ENCODE measurements at regions of chr12 and their contacts with region 1.

Region 1: DNA sequence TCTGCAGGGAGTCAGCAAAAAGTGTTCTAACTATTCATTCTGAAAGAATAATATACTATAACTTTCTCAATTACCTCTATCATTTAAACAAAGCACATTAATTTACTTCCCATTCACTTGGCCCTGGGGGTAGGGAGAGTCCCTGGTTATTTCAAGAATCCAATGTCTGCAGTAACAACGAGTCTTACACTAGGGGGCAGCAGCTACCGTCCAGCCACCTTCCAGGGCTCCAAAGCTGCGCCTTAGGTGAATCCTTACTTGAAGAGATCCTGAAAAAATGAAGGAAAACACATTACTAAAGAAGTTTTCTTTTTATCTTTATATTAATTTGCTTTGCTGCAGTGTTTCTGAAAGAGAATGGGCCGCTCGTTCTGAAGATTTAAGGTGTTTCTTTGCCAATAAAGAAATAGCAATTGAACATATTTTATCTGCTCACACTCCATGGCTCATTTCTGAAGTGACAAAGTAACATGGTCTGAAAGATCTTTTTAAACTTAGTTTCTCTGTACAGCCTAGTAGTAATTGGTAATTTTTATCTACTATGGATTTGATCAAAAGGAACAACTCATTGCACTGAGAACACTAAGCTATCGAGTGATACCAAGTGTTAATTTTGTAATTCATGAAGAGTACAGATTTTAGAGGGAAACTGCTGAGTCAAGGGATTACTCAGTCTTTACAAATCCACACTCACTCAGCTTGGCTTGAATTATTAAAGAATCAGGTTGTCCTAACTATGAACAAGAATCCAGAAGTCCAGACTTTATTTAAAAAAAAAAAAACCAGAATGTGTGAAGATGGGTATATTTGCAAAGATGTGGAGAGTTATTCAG is 27.6 kb downstream of the BHLHE41 start:
- DNase-seq: peak; percentile 66 to 79 (median 77)
- H3K4me3 ChIP-seq: no peak overlapping the region
- H3K27ac ChIP-seq: no peak overlapping the region
- H3K4me1 ChIP-seq: no peaks in the 10 kb centered on the region
- H3K27me3 ChIP-seq: no peaks in the 10 kb centered on the region
- CTCF ChIP-seq: peak; percentile 76 to 88 (median 87)
- EP300 ChIP-seq: no peak
- POLR2A ChIP-seq: no peak

Region 2: GRCh38 chr12:25811656-25812126 is 285.6 kb before region 1 on chr12:
- intact Hi-C with region 1: no loop called
- DNase-seq: no peak
- H3K4me3 ChIP-seq: no peak overlapping the region
- H3K27ac ChIP-seq: no peak overlapping the region
- H3K4me1 ChIP-seq: no peaks in the 10 kb centered on the region
- H3K27me3 ChIP-seq: no peaks in the 10 kb centered on the region
- CTCF ChIP-seq: no peak
- EP300 ChIP-seq: no peak
- POLR2A ChIP-seq: no peak

Region 3: GRCh38 chr12:26188127-26188526 is 90.9 kb after region 1 on chr12:
- intact Hi-C with region 1: no loop called
- DNase-seq: no peak
- H3K4me3 ChIP-seq: no peak overlapping the region
- H3K27ac ChIP-seq: no peak overlapping the region
- H3K4me1 ChIP-seq: no peaks in the 10 kb centered on the region
- H3K27me3 ChIP-seq: no peaks in the 10 kb centered on the region
- CTCF ChIP-seq: no peak
- EP300 ChIP-seq: no peak
- POLR2A ChIP-seq: no peak

Region 4: GRCh38 chr12:26651566-26652188 is 554.4 kb after region 1 on chr12:
- intact Hi-C with region 1: loop called in 1 of 4 experiments (anchors 10 kb)
- DNase-seq: peak in 4 of 5 donors; percentile 18 to 63 (median 38)
- H3K4me3 ChIP-seq: no peak overlapping the region
- H3K27ac ChIP-seq: no peak overlapping the region
- H3K4me1 ChIP-seq: peaks cover 2% of the 10 kb centered on the region
- H3K27me3 ChIP-seq: no peaks in the 10 kb centered on the region
- CTCF ChIP-seq: peak; percentile 17 to 73 (median 71)
- EP300 ChIP-seq: no peak
- POLR2A ChIP-seq: no peak

Region 5: GRCh38 chr12:26701604-26702215 is 604.4 kb after region 1 on chr12:
- intact Hi-C with region 1: loop called in 2 of 4 experiments (anchors 1 to 5 kb)
- DNase-seq: no peak
- H3K4me3 ChIP-seq: no peak overlapping the region
- H3K27ac ChIP-seq: no peak overlapping the region
- H3K4me1 ChIP-seq: peaks cover 3% of the 10 kb centered on the region
- H3K27me3 ChIP-seq: no peaks in the 10 kb centered on the region
- CTCF ChIP-seq: peak in 2 of 3 donors; percentile 11 to 40
- EP300 ChIP-seq: no peak
- POLR2A ChIP-seq: no peak